Dorsolateral prefrontal cortex (tissue), 120 donors: ENCODE measurements at regions of chr11 and their contacts with region 1.

Region 1: GRCh38 chr11:119975561-119976152 is 162.3 kb downstream of the TRIM29 start:
- DNase-seq: peak; percentile 19 to 91 (median 84)
- H3K4me3 ChIP-seq: peak overlapping the region in 47 of 59 donors; percentile 1 to 59 (median 34)
- H3K27ac ChIP-seq: peak overlapping the region; percentile 40 to 99 (median 95)
- H3K27me3 ChIP-seq: no peaks in the 10 kb centered on the region
- CTCF ChIP-seq: peak in 18 of 56 donors; percentile 4 to 39 (median 18)

Region 2: GRCh38 chr11:119891055-119891768 is 84.4 kb before region 1 on chr11:
- intact Hi-C with region 1: loop called in 1 of 2 experiments (anchors 1 kb)
- DNase-seq: peak in 9 of 10 donors; percentile 67 to 94 (median 87)
- H3K4me3 ChIP-seq: peak overlapping the region in 5 of 59 donors; percentile 18 to 36 (median 22)
- H3K27ac ChIP-seq: peak overlapping the region in 58 of 59 donors; percentile 51 to 99 (median 94)
- H3K27me3 ChIP-seq: peaks cover 0 to 7% (median 0%) of the 10 kb centered on the region in 45 donors
- CTCF ChIP-seq: peak in 15 of 56 donors; percentile 8 to 41 (median 23)

Region 3: GRCh38 chr11:119935349-119935925 is 40.2 kb before region 1 on chr11:
- intact Hi-C with region 1: loop called in 1 of 2 experiments (anchors 5 kb)
- DNase-seq: peak in 5 of 10 donors; percentile 41 to 72 (median 61)
- H3K4me3 ChIP-seq: no peak overlapping the region
- H3K27ac ChIP-seq: peak overlapping the region in 50 of 59 donors; percentile 1 to 92 (median 81)
- H3K27me3 ChIP-seq: no peaks in the 10 kb centered on the region
- CTCF ChIP-seq: no peak

Region 4: GRCh38 chr11:120013325-120014270 is 37.9 kb after region 1 on chr11:
- intact Hi-C with region 1: loop called (anchors 1 to 5 kb)
- DNase-seq: peak; percentile 55 to 80 (median 74)
- H3K4me3 ChIP-seq: peak overlapping the region in 3 of 59 donors; percentile 11 to 23 (median 23)
- H3K27ac ChIP-seq: peak overlapping the region in 55 of 59 donors; percentile 4 to 92 (median 80)
- H3K27me3 ChIP-seq: peaks cover 0 to 22% (median 0%) of the 10 kb centered on the region in 45 donors
- CTCF ChIP-seq: peak; percentile 31 to 90 (median 76)

Region 5: DNA sequence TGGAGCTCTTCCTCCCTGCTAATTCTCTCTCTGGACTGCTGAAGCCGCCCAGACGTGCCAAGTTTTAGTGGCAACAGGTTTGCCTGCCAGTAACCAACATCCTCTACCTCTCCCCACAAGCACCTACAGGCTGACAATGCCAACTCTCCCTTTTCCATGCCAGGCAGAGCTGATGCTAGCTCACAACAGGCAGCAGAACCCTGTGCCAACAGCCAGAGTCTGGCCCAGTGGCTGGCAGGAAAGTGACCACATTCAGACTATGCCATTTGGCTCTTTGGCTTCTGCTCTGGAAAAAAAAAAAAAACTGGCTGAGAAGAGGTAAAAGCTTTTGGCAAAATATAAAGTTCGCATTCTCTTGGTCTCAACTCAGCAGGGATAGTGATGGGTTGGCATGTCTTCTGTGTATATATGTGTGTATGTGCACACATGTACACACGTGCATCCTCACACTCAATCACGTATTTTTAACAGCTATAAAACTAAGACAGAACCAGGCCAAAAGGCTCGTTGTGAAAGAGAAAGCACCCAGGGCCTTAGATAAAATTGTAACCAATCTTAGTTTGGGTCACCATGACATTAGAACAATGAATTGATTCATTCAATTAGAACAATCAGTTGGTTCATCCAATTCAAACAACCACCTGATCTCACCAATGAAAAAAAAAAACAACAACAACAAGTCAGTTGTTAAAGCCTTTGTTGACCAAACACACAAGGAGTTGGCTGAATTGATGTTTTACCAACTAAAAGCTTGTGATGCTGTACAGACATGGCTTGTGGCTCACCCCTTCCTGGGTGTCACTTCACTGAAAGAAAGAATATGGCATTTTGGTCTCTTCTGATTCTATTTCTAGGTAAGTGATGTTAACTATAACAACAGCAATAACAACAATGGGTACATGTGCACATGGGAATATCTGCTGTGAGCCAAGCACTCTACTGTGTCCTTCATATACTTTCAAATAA is 113.7 kb after region 1 on chr11:
- intact Hi-C with region 1: loop called (anchors 2 kb)
- DNase-seq: peak in 9 of 10 donors; percentile 39 to 87 (median 70)
- H3K4me3 ChIP-seq: peak overlapping the region in 18 of 59 donors; percentile 1 to 36 (median 24)
- H3K27ac ChIP-seq: peak overlapping the region; percentile 88 to 100 (median 98)
- H3K27me3 ChIP-seq: no peaks in the 10 kb centered on the region
- CTCF ChIP-seq: no peak